ENCODE measurements at regions of chr2 and their contacts with region 1.

Region 1: DNA sequence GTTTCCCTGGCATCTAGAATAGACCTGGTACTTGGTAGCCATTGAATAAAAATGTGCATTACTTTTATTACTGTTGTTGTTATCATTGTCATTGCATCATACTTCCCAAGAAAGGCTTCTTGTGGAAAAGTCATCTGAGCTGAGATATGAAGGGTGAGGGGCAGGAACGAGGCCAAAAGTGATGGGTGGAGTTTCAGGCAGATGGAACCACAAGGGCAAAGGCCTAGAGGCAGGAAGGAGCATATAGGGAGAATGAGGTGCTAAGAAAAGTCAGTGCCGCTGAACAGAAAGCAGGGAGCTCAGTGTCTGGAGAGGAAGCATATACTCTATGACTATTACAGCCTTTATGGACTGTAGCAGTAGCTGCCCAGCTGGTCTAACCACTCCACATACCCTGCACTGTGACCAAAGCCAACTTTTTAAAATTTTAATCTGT is 219.3 kb downstream of the SPP2 start:
- DNase-seq: no peak
- ATAC-seq: no peak
- H3K4me3 ChIP-seq: no peak overlapping the region
- H3K4me3 Mint-ChIP-seq: no peak overlapping the region
- H3K27ac ChIP-seq: no peak overlapping the region
- H3K27ac Mint-ChIP-seq: peak overlapping the region in 2 of 9 donors; percentile 13 to 40
- H3K4me1 ChIP-seq: peaks cover 0 to 32% of the 10 kb centered on the region in 2 donors
- H3K4me1 Mint-ChIP-seq: peaks cover 23 to 79% (median 51%) of the 10 kb centered on the region in 7 donors
- H3K27me3 ChIP-seq: no peaks in the 10 kb centered on the region
- H3K27me3 Mint-ChIP-seq: no peaks in the 10 kb centered on the region

Region 2: GRCh38 chr2:234257856-234258561 is 11.8 kb before region 1 on chr2:
- CTCF ChIA-PET with region 1: interaction called, 4 read pairs
- POLR2A ChIA-PET with region 1: interaction called, 3 read pairs
- intact Hi-C with region 1: loop called in 1 of 2 experiments (anchors 2 kb)
- DNase-seq: peak in 1 of 9 donors; percentile 42
- ATAC-seq: peak; percentile 34
- H3K4me3 ChIP-seq: no peak overlapping the region
- H3K4me3 Mint-ChIP-seq: no peak overlapping the region
- H3K27ac ChIP-seq: no peak overlapping the region
- H3K27ac Mint-ChIP-seq: peak overlapping the region in 1 of 9 donors; percentile 35
- H3K4me1 ChIP-seq: no peaks in the 10 kb centered on the region
- H3K4me1 Mint-ChIP-seq: peaks cover 0 to 30% (median 20%) of the 10 kb centered on the region in 7 donors
- H3K27me3 ChIP-seq: no peaks in the 10 kb centered on the region
- H3K27me3 Mint-ChIP-seq: no peaks in the 10 kb centered on the region

Measured in naive thymus-derived CD4-positive, alpha-beta T cell (primary cell).